Heart right ventricle (tissue), 16 donors: ENCODE measurements at regions of chr4 and their contacts with region 1.

Region 1: DNA sequence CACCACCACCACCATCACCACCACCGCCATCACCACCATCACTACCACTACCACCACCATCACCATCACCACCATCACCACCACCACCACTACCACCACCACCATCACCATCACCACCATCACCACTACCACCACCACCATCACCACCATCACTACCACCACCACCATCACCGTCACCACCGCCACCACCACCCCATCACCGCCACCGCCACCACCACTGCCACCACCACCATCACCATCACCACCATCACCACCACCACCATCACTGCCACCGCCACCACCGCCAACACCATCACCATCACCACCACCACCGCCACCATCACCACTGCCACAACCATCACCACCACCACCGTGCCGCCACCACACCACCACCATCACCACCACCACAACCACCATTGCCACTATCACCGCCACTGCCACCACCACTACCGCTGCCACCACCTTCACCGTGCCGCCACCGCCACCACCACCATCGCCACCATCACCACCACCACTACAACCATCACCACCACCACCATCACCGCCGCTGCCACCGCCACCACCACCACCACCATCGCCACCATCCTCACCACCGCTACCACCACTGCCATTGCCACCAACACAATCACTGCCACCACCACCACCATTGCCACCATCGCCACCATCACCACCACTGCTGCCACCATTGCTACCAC is 1511.3 kb upstream of the AGA start:
- DNase-seq: no peak
- ATAC-seq: no peak
- H3K4me3 ChIP-seq: no peak overlapping the region
- H3K27ac ChIP-seq: no peak overlapping the region
- H3K4me1 ChIP-seq: no peaks in the 10 kb centered on the region
- H3K27me3 ChIP-seq: no peaks in the 10 kb centered on the region
- CTCF ChIP-seq: no peak

Region 2: GRCh38 chr4:177163532-177163931 is 1790.1 kb before region 1 on chr4:
- intact Hi-C with region 1: loop called in 1 of 10 experiments (anchors 5 kb)
- DNase-seq: no peak
- ATAC-seq: no peak
- H3K4me3 ChIP-seq: no peak overlapping the region
- H3K27ac ChIP-seq: no peak overlapping the region
- H3K4me1 ChIP-seq: no peaks in the 10 kb centered on the region
- H3K27me3 ChIP-seq: no peaks in the 10 kb centered on the region
- CTCF ChIP-seq: no peak